RWPE1 (cell line): ENCODE measurements at regions of chr2 and their contacts with region 1.

Region 1: DNA sequence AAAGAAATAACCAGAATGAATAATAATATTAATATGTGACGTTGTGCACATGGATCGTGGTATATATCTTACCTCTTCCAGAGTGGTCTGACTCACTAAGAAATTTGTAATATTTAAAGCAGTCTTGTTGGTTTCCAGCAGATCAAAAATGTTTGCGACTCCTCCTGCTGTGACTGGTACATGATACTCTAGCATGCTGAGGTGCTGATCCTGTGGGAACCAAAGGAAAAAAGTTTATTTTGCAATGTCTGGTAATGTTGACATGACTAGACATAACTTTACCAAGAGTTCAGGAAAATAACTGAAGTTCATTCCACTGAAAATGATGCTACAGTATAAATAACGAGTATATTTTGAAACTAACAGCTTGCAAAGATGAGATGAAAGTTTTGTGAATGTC is 124.5 kb upstream of the BARD1 start:
- DNase-seq: no peak
- H3K27ac ChIP-seq: no peak overlapping the region
- CTCF ChIP-seq: no peak

Region 2: GRCh38 chr2:215156453-215156852 is 222.4 kb after region 1 on chr2:
- CTCF ChIA-PET with region 1: interaction called, 10 read pairs
- POLR2A ChIA-PET with region 1: no interaction called
- DNase-seq: no peak
- H3K27ac ChIP-seq: no peak overlapping the region
- CTCF ChIP-seq: no peak